Activated naive CD4-positive, alpha-beta T cell treated with anti-CD3 and anti-CD28 coated beads for 36 hours (primary cell): ENCODE measurements at regions of chr1 and their contacts with region 1.

Region 1: DNA sequence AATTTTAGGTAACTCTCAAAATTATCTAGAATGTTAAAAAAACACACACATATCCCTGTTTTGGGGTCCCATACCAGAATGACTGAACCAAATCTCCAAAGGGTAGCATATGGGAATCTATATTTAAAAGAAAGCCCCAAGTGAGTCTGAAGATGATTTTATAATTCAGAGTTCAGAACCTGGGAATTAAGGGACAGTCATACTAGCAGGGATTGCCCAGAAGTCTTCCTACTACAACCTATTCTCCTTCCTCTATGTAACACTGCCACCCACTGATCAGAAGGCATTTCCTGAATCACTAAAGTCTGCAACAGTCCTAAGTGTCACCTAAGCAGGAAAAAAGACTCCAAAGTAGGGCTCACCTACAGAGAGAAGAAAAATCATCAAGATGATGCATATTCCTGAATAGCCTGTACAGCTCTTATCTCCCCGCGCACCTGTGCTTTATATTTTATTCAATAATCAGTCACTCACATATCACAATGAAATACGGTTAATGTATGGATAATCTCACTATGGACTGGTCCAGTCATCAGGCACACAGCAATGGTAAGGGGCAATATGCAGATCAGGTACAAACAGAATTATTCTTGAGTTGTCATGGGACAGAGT is 4.9 kb downstream of the RGS1 start:
- DNase-seq: peak; percentile 42
- H3K4me3 Mint-ChIP-seq: no peak overlapping the region
- H3K27ac Mint-ChIP-seq: no peak overlapping the region
- H3K4me1 Mint-ChIP-seq: peaks cover 27% of the 10 kb centered on the region
- H3K27me3 Mint-ChIP-seq: no peaks in the 10 kb centered on the region

Region 2: GRCh38 chr1:192506741-192507155 is 73.7 kb before region 1 on chr1:
- CTCF ChIA-PET with region 1: interaction called, 7 read pairs
- intact Hi-C with region 1: loop called (anchors 1 kb)
- DNase-seq: peak; percentile 21
- H3K4me3 Mint-ChIP-seq: no peak overlapping the region
- H3K27ac Mint-ChIP-seq: no peak overlapping the region
- H3K4me1 Mint-ChIP-seq: no peaks in the 10 kb centered on the region
- H3K27me3 Mint-ChIP-seq: no peaks in the 10 kb centered on the region

Region 3: DNA sequence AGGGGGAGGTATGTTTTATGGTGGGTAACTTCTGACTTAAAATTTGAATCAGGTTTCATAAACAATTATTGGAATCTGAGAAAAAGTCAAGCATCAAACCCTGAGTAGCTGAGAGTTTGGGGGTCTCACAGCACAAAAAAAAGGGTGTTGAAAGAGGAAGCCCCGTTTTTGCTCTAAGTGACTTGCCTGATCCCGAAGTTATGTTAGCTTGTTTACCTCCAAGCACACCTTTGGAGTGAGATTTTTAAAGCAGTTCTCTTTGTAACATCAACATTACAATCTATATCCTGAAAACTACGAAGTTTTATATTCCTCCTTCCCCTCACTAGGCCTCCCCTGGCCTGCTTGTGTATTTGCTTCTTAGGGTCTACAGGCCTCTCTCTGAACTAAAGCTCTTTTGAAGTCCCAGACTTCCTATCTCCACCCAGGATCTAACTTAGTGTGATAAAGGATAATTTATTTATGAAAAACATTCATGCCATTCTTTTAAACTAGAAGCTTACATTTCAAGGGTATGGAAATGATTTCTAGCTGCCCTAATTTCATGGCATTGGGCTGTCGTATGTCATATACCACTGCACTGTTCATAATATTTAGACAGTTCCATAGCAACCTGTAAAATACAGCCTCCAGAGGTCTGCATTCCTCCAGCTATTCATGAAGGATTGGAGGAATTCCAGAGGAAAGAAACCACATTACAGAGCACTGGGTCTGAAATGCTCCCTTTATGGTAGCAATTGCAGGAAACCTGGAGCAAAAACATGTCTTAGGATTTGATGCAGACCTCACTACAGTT is 41.0 kb before region 1 on chr1:
- CTCF ChIA-PET with region 1: interaction called, 6 read pairs
- intact Hi-C with region 1: loop called (anchors 1 kb)
- DNase-seq: no peak
- H3K4me3 Mint-ChIP-seq: no peak overlapping the region
- H3K27ac Mint-ChIP-seq: peak overlapping the region; percentile 51
- H3K4me1 Mint-ChIP-seq: peaks cover 28% of the 10 kb centered on the region
- H3K27me3 Mint-ChIP-seq: no peaks in the 10 kb centered on the region

Region 4: DNA sequence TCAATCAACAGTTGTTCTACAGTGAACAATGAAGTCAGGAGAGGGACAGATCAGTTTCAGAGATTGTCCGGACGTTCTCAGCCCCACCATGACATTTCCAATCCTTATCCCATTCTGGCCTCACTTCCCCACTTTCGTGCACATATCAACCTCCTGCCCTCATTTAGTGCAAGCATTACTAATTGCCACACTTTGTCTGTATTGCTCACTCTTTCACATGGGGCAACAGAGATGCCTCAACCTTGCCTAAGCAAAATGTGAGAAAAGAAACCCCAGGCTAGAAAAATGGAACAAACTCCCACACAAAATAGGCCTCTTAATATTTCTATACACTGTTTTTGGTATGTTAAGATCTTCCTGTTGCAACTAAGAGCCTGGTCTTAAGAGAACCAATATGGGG is 13.8 kb before region 1 on chr1:
- CTCF ChIA-PET with region 1: interaction called, 5 read pairs
- intact Hi-C with region 1: loop called (anchors 1 kb)
- DNase-seq: no peak
- H3K4me3 Mint-ChIP-seq: no peak overlapping the region
- H3K27ac Mint-ChIP-seq: no peak overlapping the region
- H3K4me1 Mint-ChIP-seq: peaks cover 40% of the 10 kb centered on the region
- H3K27me3 Mint-ChIP-seq: no peaks in the 10 kb centered on the region

Region 5: DNA sequence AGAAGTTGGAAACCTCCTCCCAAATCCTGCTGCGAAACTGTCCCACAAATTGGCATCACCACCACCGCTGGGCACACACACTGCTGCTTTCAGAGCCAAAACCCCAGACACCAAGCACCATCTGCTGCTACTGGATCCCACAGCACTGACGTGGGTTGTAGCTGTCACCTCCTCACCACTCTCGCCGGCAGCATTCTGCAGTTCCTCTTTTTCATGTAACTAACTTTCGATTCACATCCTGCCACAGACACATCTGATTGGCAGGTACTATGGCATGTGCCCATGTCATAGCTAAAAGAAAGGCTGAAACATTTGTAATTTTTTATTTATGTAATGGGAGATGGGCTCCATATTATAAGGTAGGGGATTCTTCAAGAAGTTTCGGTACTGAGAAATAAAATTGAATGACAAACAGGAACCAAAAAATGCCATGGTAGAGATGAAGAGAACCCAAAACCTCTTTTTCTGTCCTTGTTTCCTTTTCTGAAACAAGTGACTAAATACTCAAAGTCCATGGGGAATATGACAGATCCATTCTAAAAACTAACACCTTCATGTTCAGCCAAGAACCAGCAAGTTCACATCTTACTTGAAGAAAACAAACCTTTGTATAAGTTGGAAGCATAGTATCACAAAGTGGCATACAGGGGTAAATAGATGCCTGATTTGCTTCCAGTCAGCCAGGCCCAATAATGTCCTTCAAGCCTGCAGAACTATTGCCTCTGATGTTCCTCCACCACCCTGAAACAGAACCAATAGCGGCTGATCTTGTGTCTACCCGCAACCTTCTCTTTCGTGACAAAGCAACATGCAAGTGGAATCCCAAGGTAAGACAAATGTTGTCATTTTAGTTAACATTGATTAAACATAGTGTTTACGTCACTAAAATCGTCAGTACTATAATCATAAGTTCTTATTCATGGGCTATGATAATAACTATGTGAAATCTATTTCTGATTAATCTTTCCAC is 28.9 kb after region 1 on chr1:
- CTCF ChIA-PET with region 1: interaction called, 4 read pairs
- intact Hi-C with region 1: loop called (anchors 1 kb)
- DNase-seq: peak; percentile 79
- H3K4me3 Mint-ChIP-seq: peak overlapping the region; percentile 30
- H3K27ac Mint-ChIP-seq: no peak overlapping the region
- H3K4me1 Mint-ChIP-seq: peaks cover 14% of the 10 kb centered on the region
- H3K27me3 Mint-ChIP-seq: no peaks in the 10 kb centered on the region

Region 6: DNA sequence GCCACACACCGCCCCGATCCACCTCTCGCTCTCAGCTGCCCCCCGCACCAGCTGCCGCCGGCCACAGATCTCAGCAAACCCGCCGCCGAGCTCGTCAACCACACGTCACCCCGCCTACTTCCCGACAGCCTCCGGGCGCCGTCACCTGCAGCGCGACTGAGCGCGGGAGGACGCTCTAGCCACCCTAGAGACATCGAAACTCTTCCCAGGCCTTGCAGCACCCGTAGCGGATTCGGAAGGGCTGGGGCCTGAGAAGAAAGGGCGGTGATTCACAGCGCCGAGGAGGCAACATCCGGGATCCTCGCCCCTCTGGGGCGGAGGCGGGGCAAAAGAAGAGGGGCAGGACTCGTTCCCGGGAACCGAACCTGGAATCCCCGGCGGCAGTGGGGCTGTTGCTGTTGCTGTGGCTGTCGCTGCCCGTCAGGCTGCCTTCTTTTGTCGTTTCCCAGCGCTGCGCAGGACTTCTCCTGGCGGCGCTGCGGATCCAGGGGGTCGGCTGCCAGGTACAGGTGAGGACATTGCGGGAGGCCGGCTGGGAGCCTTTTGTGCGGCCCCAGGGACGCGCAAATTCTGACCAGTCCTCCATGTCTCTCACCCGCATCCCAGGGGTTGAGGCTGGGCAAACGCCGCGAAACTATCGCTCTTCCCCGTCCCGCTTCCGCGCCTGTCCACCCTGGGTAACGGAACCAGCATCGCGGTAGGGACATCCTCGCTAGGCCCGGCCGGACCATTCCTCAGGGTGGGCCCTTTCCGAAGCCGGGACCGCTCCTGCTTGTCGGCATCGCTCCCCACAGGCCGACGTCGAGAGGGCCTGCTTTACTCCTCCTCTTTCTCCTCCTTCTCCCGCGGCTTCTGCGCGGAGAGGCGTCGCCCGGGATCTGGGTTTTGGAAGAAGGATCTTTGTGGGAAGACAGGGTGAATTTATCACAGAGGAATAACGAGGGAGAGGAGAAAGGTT is 479.1 kb after region 1 on chr1 and contains the starts of genes RO60 and UCHL5:
- CTCF ChIA-PET with region 1: no interaction called
- intact Hi-C with region 1: loop called (anchors 5 kb)
- DNase-seq: peak; percentile 97
- H3K4me3 Mint-ChIP-seq: peak within 1 kb of the TSS; percentile 94
- H3K27ac Mint-ChIP-seq: peak within 1 kb of the TSS; percentile 97
- H3K4me1 Mint-ChIP-seq: peaks cover 59% of the 10 kb centered on the region
- H3K27me3 Mint-ChIP-seq: no peaks in the 10 kb centered on the region
- total RNA-seq, gene RO60: 42.8 to 48.0 TPM
- total RNA-seq, gene UCHL5: 63.4 to 68.8 TPM

Region 7: DNA sequence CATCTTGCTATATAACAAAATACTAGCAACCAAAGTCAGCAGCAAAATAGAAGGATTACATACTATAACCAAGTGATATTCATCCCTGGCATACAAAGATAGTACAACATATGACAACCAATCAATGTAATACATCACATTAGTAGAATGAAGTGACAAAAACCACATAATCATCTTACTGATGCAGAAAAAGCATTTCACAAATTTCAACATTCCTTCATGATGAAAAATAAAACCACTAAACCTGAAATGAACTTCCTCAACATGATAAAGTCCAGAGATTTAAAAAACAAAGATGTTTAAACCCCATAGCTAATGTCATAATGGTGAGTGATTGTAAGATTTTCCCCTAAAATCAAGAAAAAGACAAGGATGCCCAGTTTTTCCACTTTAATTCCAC is 497.5 kb after region 1 on chr1:
- CTCF ChIA-PET with region 1: no interaction called
- intact Hi-C with region 1: no loop called
- DNase-seq: no peak
- H3K4me3 Mint-ChIP-seq: no peak overlapping the region
- H3K27ac Mint-ChIP-seq: no peak overlapping the region
- H3K4me1 Mint-ChIP-seq: peaks cover 7% of the 10 kb centered on the region
- H3K27me3 Mint-ChIP-seq: no peaks in the 10 kb centered on the region